ENCODE measurements at regions of chr15 and their contacts with region 1.

Region 1: GRCh38 chr15:101258238-101259144 is 6.6 kb upstream of the CHSY1 start:
- DNase-seq: peak; percentile 38
- ATAC-seq: peak; percentile 85
- H3K4me3 ChIP-seq: peak overlapping the region in 1 of 2 experiments; percentile 12; a peak in 1 of 4 replicates
- H3K27ac ChIP-seq: no peak overlapping the region
- H3K4me1 ChIP-seq: peaks cover 14% of the 10 kb centered on the region
- H3K27me3 ChIP-seq: no peaks in the 10 kb centered on the region
- CTCF ChIP-seq: peak; percentile 84

Region 2: GRCh38 chr15:101014921-101015841 is 243.3 kb before region 1 on chr15:
- CTCF ChIA-PET with region 1: interaction called, 5 read pairs
- POLR2A ChIA-PET with region 1: no interaction called
- in situ Hi-C with region 1: no loop called
- intact Hi-C with region 1: loop called (anchors 1 kb)
- DNase-seq: no peak
- ATAC-seq: peak; percentile 81
- H3K4me3 ChIP-seq: no peak overlapping the region
- H3K27ac ChIP-seq: no peak overlapping the region
- H3K4me1 ChIP-seq: no peaks in the 10 kb centered on the region
- H3K27me3 ChIP-seq: no peaks in the 10 kb centered on the region
- CTCF ChIP-seq: peak; percentile 96

Region 3: GRCh38 chr15:101088788-101089583 is 169.5 kb before region 1 on chr15:
- CTCF ChIA-PET with region 1: interaction called, 7 read pairs
- POLR2A ChIA-PET with region 1: no interaction called
- in situ Hi-C with region 1: no loop called
- intact Hi-C with region 1: loop called (anchors 1 kb)
- DNase-seq: peak; percentile 15
- ATAC-seq: peak; percentile 93
- H3K4me3 ChIP-seq: peak overlapping the region; percentile 41 to 47
- H3K27ac ChIP-seq: peak overlapping the region; percentile 29
- H3K4me1 ChIP-seq: 0 out of 2 replicates have a peak, but pooled peaks cover 7% of the 10 kb centered on the region
- H3K27me3 ChIP-seq: no peaks in the 10 kb centered on the region
- CTCF ChIP-seq: peak; percentile 100

Region 4: DNA sequence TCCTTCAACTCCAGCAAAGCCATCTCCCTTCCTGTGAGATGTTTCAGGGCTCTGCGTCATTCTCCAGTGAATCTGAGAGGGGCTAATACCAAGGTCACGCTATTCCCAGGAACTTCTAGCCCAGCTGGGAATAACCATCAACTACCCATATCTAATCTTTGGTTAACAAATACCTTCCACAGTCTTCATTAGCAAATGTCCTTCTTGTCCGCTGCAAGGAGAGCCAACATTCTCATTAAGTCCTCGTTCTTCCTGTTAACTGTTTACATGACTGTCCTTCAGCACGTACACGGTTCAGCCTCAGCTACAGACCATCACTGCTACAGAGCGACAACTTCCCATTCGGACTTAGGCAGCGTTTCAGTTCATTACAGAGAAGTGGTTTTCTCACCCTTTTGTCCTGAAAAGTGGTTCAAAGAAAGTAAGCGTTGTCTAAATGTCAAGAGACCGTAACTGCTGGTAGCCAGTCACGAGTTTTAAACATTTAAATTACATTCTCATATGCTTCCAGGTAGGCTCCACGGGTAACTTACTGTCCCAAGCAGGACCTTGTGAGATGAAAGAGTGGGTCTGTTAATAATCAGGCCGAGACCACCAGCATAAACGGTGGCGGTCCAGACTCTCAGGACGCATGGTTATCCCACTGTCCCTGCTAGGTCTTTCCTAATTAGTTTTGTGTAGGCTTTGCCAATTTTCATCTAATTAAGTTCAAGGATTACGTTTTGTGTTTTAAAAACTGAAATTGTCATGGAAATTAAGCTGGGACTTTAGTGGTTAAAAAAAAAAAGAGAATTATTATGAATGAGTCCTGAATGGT is 70.5 kb before region 1 on chr15:
- CTCF ChIA-PET with region 1: no interaction called
- POLR2A ChIA-PET with region 1: no interaction called
- in situ Hi-C with region 1: no loop called
- intact Hi-C with region 1: no loop called
- DNase-seq: no peak
- ATAC-seq: no peak
- H3K4me3 ChIP-seq: no peak overlapping the region
- H3K27ac ChIP-seq: peak overlapping the region; percentile 54
- H3K4me1 ChIP-seq: peaks cover 40% of the 10 kb centered on the region
- H3K27me3 ChIP-seq: no peaks in the 10 kb centered on the region
- CTCF ChIP-seq: no peak

Region 5: GRCh38 chr15:101455291-101456025 is 197.0 kb after region 1 on chr15:
- CTCF ChIA-PET with region 1: no interaction called
- POLR2A ChIA-PET with region 1: no interaction called
- in situ Hi-C with region 1: no loop called
- intact Hi-C with region 1: no loop called
- DNase-seq: no peak
- ATAC-seq: peak; percentile 31; the same call in 1 of the 2 replicates
- H3K4me3 ChIP-seq: no peak overlapping the region
- H3K27ac ChIP-seq: no peak overlapping the region
- H3K4me1 ChIP-seq: peaks cover 5% of the 10 kb centered on the region; the same call in 1 of the 2 replicates
- H3K27me3 ChIP-seq: no peaks in the 10 kb centered on the region
- CTCF ChIP-seq: no peak

Measured in Panc1 (cell line).